A549 (cell line): ENCODE measurements at regions of chr6 and their contacts with region 1.

Region 1: GRCh38 chr6:149563203-149563927 is 2.8 kb upstream of the GINM1 start:
- DNase-seq: peak; percentile 10 to 39
- ATAC-seq: no peak
- H3K4me3 ChIP-seq: no peak overlapping the region
- H3K27ac ChIP-seq: peak overlapping the region in 1 of 2 experiments; percentile 72; a peak in 3 of 6 replicates
- H3K4me1 ChIP-seq: peaks cover 32% of the 10 kb centered on the region
- CTCF ChIP-seq: no peak
- EP300 ChIP-seq: no peak
- POLR2A ChIP-seq: no peak
- RAD21 ChIP-seq: no peak

Region 2: GRCh38 chr6:149545754-149546528 is 17.4 kb before region 1 on chr6 and contains the start of gene PPIL4:
- CTCF ChIA-PET with region 1: interaction called, 11 read pairs
- POLR2A ChIA-PET with region 1: interaction called, 8 read pairs
- DNase-seq: peak; percentile 41 to 92
- ATAC-seq: peak; percentile 93 to 96
- H3K4me3 ChIP-seq: peak within 1 kb of the TSS; percentile 95
- H3K27ac ChIP-seq: peak within 1 kb of the TSS; percentile 86 to 91
- H3K4me1 ChIP-seq: peaks cover 15% of the 10 kb centered on the region
- CTCF ChIP-seq: peak; percentile 85
- EP300 ChIP-seq: no peak
- POLR2A ChIP-seq: peak; percentile 46
- RAD21 ChIP-seq: peak in 1 of 2 experiments; percentile 61; a peak in 3 of 5 replicates
- polyA plus RNA-seq, gene PPIL4: 8.9 and 12.1 TPM in 2 replicates